ENCODE measurements at regions of chr3 and their contacts with region 1.

Region 1: DNA sequence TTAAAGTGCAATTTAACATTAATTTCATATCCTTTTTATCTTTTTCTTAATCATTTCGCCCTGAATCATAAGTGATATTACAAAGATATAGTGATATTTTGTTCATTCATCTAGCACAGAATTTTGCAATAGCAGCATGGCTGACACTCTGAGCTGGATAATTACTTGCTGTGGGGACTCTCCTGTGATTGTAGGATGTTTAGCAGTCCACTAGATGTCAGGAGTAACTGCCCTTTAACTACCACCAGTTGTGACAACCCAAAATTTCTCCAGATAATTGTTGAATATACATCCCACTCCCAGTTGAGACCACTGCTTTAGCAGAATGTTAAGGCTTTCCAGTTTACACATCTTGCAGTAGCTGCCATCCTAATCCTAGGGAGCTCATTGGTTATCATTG is 196.8 kb upstream of the MBNL1 start:
- DNase-seq: no peak
- H3K4me3 ChIP-seq: no peak overlapping the region
- H3K27me3 ChIP-seq: no peaks in the 10 kb centered on the region
- CTCF ChIP-seq: peak; percentile 54

Region 2: GRCh38 chr3:152061296-152061695 is 10.6 kb before region 1 on chr3:
- CTCF ChIA-PET with region 1: interaction called, 10 read pairs
- POLR2A ChIA-PET with region 1: no interaction called
- DNase-seq: no peak
- H3K4me3 ChIP-seq: no peak overlapping the region
- H3K27me3 ChIP-seq: no peaks in the 10 kb centered on the region
- CTCF ChIP-seq: no peak

Region 3: DNA sequence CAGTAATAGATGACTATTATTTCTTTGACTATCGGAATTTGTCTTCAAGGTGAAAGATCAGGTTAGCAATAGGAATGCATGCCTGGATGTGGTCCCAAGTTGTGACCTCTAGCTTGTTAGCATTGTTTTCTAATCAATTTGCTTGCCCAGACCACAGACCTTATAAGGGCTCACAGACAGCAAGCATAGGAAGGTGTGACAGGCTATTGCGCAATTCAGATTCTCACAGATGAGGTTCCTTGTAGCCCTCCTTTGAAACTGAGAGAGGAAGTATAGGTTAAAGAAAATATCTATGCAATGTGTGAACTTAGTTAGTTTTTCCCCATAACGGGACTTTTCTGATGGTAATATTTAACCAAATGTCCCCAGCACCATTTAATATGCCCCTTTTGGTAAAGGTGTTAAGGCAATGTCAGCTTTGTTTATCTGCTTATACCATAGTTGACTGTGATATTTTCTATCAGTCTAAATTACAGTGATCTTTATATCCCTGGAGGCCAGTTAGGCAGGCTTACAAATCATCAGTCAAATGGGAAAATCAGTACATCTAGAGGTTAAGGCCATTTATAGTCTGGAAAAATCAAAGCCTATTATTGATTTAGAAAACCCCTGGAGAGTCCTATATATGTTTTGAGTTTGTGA is 28.7 kb after region 1 on chr3:
- CTCF ChIA-PET with region 1: no interaction called
- POLR2A ChIA-PET with region 1: no interaction called
- DNase-seq: no peak
- H3K4me3 ChIP-seq: no peak overlapping the region
- H3K27me3 ChIP-seq: no peaks in the 10 kb centered on the region
- CTCF ChIP-seq: no peak

Region 4: GRCh38 chr3:152299243-152299976 is 227.5 kb after region 1 on chr3:
- CTCF ChIA-PET with region 1: interaction called, 10 read pairs
- POLR2A ChIA-PET with region 1: no interaction called
- DNase-seq: no peak
- H3K4me3 ChIP-seq: peak overlapping the region; percentile 39
- H3K27me3 ChIP-seq: no peaks in the 10 kb centered on the region
- CTCF ChIP-seq: no peak

Region 5: GRCh38 chr3:152444029-152444641 is 372.2 kb after region 1 on chr3:
- CTCF ChIA-PET with region 1: interaction called, 25 read pairs
- POLR2A ChIA-PET with region 1: no interaction called
- DNase-seq: peak; percentile 21
- H3K4me3 ChIP-seq: no peak overlapping the region
- H3K27me3 ChIP-seq: no peaks in the 10 kb centered on the region
- CTCF ChIP-seq: peak; percentile 55

Region 6: DNA sequence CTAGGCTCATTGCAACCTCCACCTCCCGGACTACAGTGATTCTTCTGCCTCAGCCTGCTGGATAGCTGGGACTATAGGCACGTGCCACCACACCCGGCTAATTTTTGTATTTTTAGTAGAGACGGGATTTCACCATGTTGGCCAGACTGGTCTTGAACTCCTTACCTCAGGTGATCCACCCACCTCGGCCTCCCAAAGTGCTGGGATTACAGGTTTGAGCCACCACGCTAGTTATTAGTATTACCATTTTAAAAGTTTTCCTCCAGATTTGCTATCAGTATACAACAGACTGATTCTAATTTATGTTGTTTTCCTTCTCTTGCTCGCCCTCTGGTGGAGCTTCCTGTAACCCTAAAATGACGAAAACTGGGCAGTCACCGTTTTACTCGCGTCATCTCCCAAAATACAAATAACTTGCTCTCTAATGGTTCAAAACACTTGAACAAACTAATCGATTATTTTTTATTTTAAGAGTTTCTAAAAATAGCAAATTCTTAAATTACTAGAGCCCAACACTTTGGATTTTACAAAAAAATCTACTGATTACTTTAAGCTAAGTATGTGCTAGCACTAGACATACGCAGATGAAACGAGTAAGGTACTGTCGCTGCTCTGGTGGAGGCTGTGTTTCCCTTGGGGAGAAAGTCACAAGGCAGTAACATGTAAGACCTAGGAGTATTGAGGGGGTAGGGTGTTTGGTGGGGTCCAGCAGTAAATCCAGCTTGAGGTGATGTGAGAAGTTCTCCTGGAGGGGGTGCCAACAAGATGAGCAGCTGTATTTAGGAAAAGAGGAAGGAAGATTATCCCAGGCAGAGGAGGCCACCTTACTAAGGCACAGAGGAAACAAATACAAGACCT is 400.1 kb after region 1 on chr3:
- CTCF ChIA-PET with region 1: interaction called, 25 read pairs
- POLR2A ChIA-PET with region 1: no interaction called
- DNase-seq: no peak
- H3K4me3 ChIP-seq: no peak overlapping the region
- H3K27me3 ChIP-seq: no peaks in the 10 kb centered on the region
- CTCF ChIP-seq: peak; percentile 74

Measured in BJ (cell line).